ENCODE measurements at regions of chr2 and their contacts with region 1.

Region 1: GRCh38 chr2:109031476-109032228 is 42.6 kb upstream of the EDAR start:
- DNase-seq: peak; percentile 45 to 98 (median 93)
- ATAC-seq: peak; percentile 83
- H3K4me3 ChIP-seq: peak overlapping the region; percentile 58
- H3K4me3 Mint-ChIP-seq: peak overlapping the region; percentile 45 to 91 (median 77)
- H3K27ac ChIP-seq: peak overlapping the region; percentile 83
- H3K27ac Mint-ChIP-seq: peak overlapping the region; percentile 84 to 99 (median 98)
- H3K4me1 ChIP-seq: peaks cover 44 to 72% of the 10 kb centered on the region in 2 donors
- H3K4me1 Mint-ChIP-seq: peaks cover 33 to 84% (median 68%) of the 10 kb centered on the region in 7 donors
- H3K27me3 ChIP-seq: no peaks in the 10 kb centered on the region
- H3K27me3 Mint-ChIP-seq: no peaks in the 10 kb centered on the region

Region 2: DNA sequence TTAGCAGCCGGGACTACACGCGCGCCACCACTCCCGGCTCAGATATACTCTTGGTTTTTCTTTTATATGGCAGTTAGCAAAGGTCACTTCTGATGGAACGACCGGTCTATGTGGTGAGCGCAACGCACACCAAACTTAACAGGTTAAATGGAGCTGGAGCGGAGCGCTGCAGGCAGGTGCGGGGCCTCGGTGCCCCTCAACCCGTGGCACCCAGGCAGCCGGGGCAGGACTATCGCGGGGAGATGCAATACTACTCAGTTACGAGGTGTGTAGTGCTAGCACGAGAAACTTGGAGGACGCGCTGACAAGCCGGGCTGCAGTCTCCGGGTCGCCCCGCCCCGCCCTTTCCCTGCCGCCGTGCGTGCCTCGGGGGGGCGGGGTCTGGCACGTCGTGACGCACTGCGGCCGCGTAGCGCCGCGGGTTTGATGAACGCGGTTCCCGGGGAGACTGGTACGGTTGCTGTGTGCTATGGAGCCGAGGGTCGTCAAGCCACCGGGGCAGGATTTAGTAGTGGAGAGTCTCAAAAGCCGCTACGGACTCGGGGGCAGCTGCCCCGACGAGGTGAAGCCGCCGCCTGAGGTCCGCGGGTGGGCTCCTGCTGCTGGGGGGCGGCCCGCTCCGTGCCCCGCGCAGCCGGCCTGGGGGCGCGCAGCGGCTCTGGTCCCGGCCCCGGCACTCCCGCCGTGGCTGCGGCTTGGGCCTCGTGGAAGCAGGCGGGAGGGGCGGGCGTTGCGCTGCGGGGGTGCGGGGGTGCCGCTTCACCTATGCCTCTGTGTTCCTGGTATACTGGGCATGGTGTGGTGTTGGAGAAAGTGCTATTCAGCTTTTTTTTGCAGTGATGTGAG is 245.1 kb before region 1 on chr2 and contains the start of gene CCDC138:
- CTCF ChIA-PET with region 1: no interaction called
- POLR2A ChIA-PET with region 1: no interaction called
- intact Hi-C with region 1: loop called (anchors 2 to 5 kb)
- DNase-seq: peak; percentile 86 to 93 (median 91)
- ATAC-seq: peak; percentile 98
- H3K4me3 ChIP-seq: peak within 1 kb of the TSS; percentile 88
- H3K4me3 Mint-ChIP-seq: peak within 1 kb of the TSS; percentile 88 to 100 (median 97)
- H3K27ac ChIP-seq: peak within 1 kb of the TSS; percentile 90
- H3K27ac Mint-ChIP-seq: peak within 1 kb of the TSS; percentile 69 to 99 (median 97)
- H3K4me1 ChIP-seq: peaks cover 6 to 13% of the 10 kb centered on the region in 2 donors
- H3K4me1 Mint-ChIP-seq: peaks cover 6 to 21% (median 17%) of the 10 kb centered on the region in 7 donors
- H3K27me3 ChIP-seq: no peaks in the 10 kb centered on the region
- H3K27me3 Mint-ChIP-seq: no peaks in the 10 kb centered on the region
- total RNA-seq, gene CCDC138: 2.7 to 10.5 (median 7.5) TPM

Region 3: GRCh38 chr2:108968619-108969018 is 63.0 kb before region 1 on chr2:
- CTCF ChIA-PET with region 1: no interaction called
- POLR2A ChIA-PET with region 1: interaction called, 10 read pairs
- intact Hi-C with region 1: loop called in 1 of 2 experiments (anchors 2 kb)
- DNase-seq: no peak
- ATAC-seq: no peak
- H3K4me3 ChIP-seq: no peak overlapping the region
- H3K4me3 Mint-ChIP-seq: peak overlapping the region in 8 of 10 donors; percentile 1 to 81 (median 54)
- H3K27ac ChIP-seq: peak overlapping the region; percentile 10
- H3K27ac Mint-ChIP-seq: peak overlapping the region in 8 of 9 donors; percentile 28 to 91 (median 72)
- H3K4me1 ChIP-seq: peaks cover 21 to 71% of the 10 kb centered on the region in 2 donors
- H3K4me1 Mint-ChIP-seq: peaks cover 21 to 100% (median 95%) of the 10 kb centered on the region in 7 donors
- H3K27me3 ChIP-seq: no peaks in the 10 kb centered on the region
- H3K27me3 Mint-ChIP-seq: no peaks in the 10 kb centered on the region

Region 4: GRCh38 chr2:109020217-109020637 is 11.4 kb before region 1 on chr2:
- CTCF ChIA-PET with region 1: interaction called, 10 read pairs
- POLR2A ChIA-PET with region 1: interaction called, 47 read pairs
- intact Hi-C with region 1: loop called in 1 of 2 experiments (anchors 1 kb)
- DNase-seq: peak in 6 of 9 donors; percentile 28 to 66 (median 46)
- ATAC-seq: peak; percentile 71
- H3K4me3 ChIP-seq: no peak overlapping the region
- H3K4me3 Mint-ChIP-seq: peak overlapping the region in 8 of 10 donors; percentile 7 to 63 (median 23)
- H3K27ac ChIP-seq: no peak overlapping the region
- H3K27ac Mint-ChIP-seq: peak overlapping the region in 8 of 9 donors; percentile 7 to 86 (median 44)
- H3K4me1 ChIP-seq: peaks cover 0 to 14% of the 10 kb centered on the region in 2 donors
- H3K4me1 Mint-ChIP-seq: peaks cover 12 to 54% (median 40%) of the 10 kb centered on the region in 7 donors
- H3K27me3 ChIP-seq: no peaks in the 10 kb centered on the region
- H3K27me3 Mint-ChIP-seq: peaks cover 0 to 9% (median 0%) of the 10 kb centered on the region in 5 donors

Region 5: DNA sequence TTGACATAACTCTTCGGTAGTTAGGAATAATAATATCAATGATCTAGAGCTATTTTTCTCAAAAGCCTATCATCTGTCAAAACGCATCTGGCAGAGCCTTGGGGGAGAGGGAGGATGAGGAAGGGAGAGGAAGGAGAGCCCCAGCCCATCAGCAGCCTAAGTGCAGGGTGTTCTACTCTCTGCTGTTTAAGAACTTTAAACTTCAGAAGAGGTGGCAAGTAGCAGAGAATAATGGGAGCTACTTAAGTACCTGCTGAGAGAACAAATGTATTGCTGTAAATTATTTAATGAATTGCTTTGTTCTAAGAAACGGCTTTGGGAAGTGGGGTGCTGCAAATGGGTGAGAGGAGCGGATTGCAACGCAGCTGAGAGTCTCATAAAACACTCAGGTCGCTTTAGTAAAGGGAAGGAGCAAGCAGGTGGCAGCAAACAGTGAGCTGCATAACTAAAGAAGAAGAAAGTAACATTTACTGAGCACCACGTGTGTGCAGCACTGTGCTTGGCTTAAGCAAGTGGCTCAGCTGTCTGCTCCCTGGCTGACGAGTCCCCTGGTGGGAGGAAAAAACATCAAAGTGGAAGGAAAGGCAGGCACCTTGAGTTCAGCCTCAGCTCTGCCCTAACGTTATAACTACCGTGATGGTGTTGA is 71.1 kb after region 1 on chr2:
- CTCF ChIA-PET with region 1: interaction called, 3 read pairs
- POLR2A ChIA-PET with region 1: interaction called, 21 read pairs
- intact Hi-C with region 1: loop called in 1 of 2 experiments (anchors 1 kb)
- DNase-seq: peak in 7 of 9 donors; percentile 17 to 45 (median 33)
- ATAC-seq: peak; percentile 57
- H3K4me3 ChIP-seq: no peak overlapping the region
- H3K4me3 Mint-ChIP-seq: peak overlapping the region in 8 of 10 donors; percentile 33 to 74 (median 64)
- H3K27ac ChIP-seq: no peak overlapping the region
- H3K27ac Mint-ChIP-seq: peak overlapping the region in 8 of 9 donors; percentile 21 to 87 (median 66)
- H3K4me1 ChIP-seq: peaks cover 0 to 13% of the 10 kb centered on the region in 2 donors
- H3K4me1 Mint-ChIP-seq: peaks cover 4 to 41% (median 36%) of the 10 kb centered on the region in 7 donors
- H3K27me3 ChIP-seq: no peaks in the 10 kb centered on the region
- H3K27me3 Mint-ChIP-seq: peaks cover 0 to 18% (median 0%) of the 10 kb centered on the region in 5 donors

Region 6: GRCh38 chr2:109304731-109305470 is 273.2 kb after region 1 on chr2:
- CTCF ChIA-PET with region 1: no interaction called
- POLR2A ChIA-PET with region 1: no interaction called
- intact Hi-C with region 1: no loop called
- DNase-seq: no peak
- ATAC-seq: no peak
- H3K4me3 ChIP-seq: no peak overlapping the region
- H3K4me3 Mint-ChIP-seq: no peak overlapping the region
- H3K27ac ChIP-seq: no peak overlapping the region
- H3K27ac Mint-ChIP-seq: no peak overlapping the region
- H3K4me1 ChIP-seq: no peaks in the 10 kb centered on the region
- H3K4me1 Mint-ChIP-seq: peaks cover 0 to 12% (median 3%) of the 10 kb centered on the region in 7 donors
- H3K27me3 ChIP-seq: no peaks in the 10 kb centered on the region
- H3K27me3 Mint-ChIP-seq: peaks cover 0 to 3% (median 0%) of the 10 kb centered on the region in 5 donors

Region 7: DNA sequence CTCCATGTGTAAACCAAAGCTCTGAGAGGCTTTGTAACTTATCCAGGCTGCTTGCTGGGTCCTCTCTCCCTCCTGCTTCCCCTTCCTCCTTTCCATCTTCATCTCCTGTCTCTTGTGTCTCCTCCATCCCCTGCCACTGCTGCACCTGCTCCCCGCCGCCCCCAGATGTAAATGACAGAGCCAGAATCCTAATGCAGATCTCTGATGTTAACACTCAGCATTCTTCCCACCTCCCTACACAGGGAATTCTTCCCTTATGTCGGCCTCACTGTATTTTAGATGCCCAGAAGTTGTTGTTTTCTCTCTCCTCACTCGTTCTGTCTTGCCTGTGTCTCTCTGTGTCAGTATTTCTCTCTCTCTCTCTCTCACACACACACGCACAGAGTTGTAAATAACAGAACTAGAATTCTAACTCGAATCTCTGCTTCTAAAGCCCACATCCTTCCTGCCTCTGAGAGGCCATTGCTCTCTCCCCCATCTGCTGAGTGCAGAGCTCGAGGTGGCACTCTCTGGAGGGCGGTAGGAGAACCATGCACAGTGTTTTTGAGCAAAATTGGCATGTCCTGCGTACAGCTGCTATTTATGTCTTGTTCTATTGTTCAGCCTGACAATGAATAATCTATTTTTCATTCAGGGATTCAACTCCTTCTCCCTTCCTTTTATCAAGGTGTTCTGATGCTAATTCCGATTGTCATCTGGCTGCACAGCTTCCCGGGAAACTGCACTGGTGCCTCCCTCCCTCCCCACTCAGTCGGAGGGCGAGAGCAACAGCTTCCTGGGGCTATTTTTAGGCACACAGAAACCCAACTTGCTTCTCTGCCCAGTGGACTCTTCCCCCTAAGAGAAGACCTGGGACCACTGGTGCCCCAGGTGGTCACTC is 317.3 kb after region 1 on chr2:
- CTCF ChIA-PET with region 1: interaction called, 3 read pairs
- POLR2A ChIA-PET with region 1: interaction called, 10 read pairs
- intact Hi-C with region 1: loop called in 1 of 2 experiments (anchors 1 kb)
- DNase-seq: peak in 7 of 9 donors; percentile 68 to 86 (median 80)
- ATAC-seq: peak; percentile 96
- H3K4me3 ChIP-seq: peak overlapping the region; percentile 43
- H3K4me3 Mint-ChIP-seq: peak overlapping the region; percentile 69 to 85 (median 78)
- H3K27ac ChIP-seq: peak overlapping the region; percentile 68
- H3K27ac Mint-ChIP-seq: peak overlapping the region; percentile 68 to 96 (median 93)
- H3K4me1 ChIP-seq: peaks cover 24 to 53% of the 10 kb centered on the region in 2 donors
- H3K4me1 Mint-ChIP-seq: peaks cover 23 to 75% (median 68%) of the 10 kb centered on the region in 7 donors
- H3K27me3 ChIP-seq: no peaks in the 10 kb centered on the region
- H3K27me3 Mint-ChIP-seq: peaks cover 0 to 16% (median 0%) of the 10 kb centered on the region in 5 donors

Region 8: GRCh38 chr2:109562421-109562820 is 530.8 kb after region 1 on chr2:
- CTCF ChIA-PET with region 1: no interaction called
- POLR2A ChIA-PET with region 1: no interaction called
- intact Hi-C with region 1: no loop called
- DNase-seq: no peak
- ATAC-seq: no peak
- H3K4me3 ChIP-seq: no peak overlapping the region
- H3K4me3 Mint-ChIP-seq: no peak overlapping the region
- H3K27ac ChIP-seq: no peak overlapping the region
- H3K27ac Mint-ChIP-seq: no peak overlapping the region
- H3K4me1 ChIP-seq: no peaks in the 10 kb centered on the region
- H3K4me1 Mint-ChIP-seq: peaks cover 0 to 2% (median 0%) of the 10 kb centered on the region in 7 donors
- H3K27me3 ChIP-seq: no peaks in the 10 kb centered on the region
- H3K27me3 Mint-ChIP-seq: peaks cover 0 to 4% (median 0%) of the 10 kb centered on the region in 5 donors